Panc1 (cell line): ENCODE measurements at regions of chr7 and their contacts with region 1.

Region 1: DNA sequence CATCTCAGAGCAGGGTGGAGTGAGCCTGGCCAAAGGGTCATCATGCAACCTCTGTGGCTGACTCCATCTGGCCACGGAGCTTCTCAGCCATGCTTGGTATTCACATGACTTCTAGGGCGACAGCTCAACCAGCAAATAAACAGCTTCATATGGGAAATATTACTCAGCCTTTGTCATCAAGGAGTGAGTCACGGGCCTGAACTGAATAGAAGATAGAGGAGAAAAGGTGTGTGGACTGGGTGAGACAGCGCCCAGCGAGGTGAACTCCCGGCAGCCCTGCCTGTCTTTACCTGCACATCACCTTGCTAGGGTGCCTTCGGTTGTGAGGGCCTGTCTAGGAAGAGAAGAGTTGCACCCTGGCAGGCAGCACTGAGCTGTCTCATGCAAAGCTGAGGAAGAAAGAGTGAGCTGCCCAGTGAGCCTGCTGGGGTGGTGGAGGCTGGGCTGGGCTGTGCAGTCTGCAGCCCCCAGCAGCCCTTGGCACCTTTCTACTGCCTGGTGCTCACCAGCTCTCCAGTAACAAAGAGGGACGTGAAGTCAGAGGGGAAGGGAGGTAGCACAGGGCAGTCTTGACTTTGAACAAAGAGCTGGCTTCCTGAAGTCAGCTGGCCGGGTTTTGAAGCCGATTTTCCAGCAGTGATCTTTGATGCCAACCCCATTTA is 114.2 kb downstream of the EGFR start:
- DNase-seq: peak; percentile 99
- ATAC-seq: peak; percentile 86
- H3K4me3 ChIP-seq: peak overlapping the region in 1 of 2 experiments; percentile 35; a peak in 2 of 4 replicates
- H3K27ac ChIP-seq: peak overlapping the region; percentile 99
- H3K4me1 ChIP-seq: peaks cover 71% of the 10 kb centered on the region
- H3K27me3 ChIP-seq: no peaks in the 10 kb centered on the region
- CTCF ChIP-seq: no peak

Region 2: DNA sequence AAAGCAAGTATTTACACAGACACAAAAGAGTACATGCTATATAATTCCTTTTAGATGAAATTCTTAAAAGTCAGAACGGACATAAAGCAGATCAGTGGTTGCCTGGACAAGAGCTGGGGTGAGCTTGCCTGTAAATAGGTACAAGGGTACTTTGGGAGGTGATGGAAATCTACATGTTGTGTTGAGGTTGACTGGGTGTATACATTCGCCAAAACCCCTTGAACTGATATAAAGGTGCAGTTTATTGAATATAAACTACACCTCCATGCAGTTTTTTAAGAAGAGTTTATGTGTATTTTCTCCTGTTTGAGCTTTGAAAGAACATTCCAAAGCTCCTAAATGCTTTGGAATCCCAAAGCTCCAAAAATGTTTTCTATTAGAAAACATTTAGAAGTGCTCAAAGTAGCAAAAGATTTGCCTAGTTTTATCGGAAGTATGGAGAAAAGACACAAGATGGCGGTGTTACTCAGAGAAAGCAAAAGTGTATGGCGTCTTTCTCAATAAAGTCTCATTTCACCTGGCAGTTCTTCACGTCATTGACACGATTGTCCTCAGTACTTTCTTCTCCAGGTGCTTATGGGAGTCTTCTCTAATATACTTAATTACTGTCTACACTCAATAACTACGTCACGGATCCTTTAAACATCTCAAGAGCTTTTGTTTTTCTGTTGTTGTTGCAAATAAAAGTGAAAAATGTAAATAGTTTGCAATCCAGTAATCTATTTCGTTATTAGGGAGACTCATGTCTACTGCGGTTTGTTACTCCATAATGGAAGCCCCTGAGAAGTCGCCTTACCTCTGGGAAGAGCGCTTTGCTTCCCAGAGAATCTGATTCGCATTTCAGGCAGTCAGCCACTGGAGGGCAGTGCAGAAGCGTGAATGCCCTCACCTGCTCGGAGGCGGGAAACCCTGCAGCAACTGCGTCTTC is 359.3 kb before region 1 on chr7:
- CTCF ChIA-PET with region 1: no interaction called
- POLR2A ChIA-PET with region 1: no interaction called
- in situ Hi-C with region 1: no loop called
- intact Hi-C with region 1: loop called (anchors 10 kb)
- DNase-seq: peak; percentile 91
- ATAC-seq: peak; percentile 99
- H3K4me3 ChIP-seq: peak overlapping the region; percentile 46 to 59
- H3K27ac ChIP-seq: peak overlapping the region; percentile 66
- H3K4me1 ChIP-seq: no peaks in the 10 kb centered on the region
- H3K27me3 ChIP-seq: peaks cover 5% of the 10 kb centered on the region; the same call in 1 of the 2 replicates
- CTCF ChIP-seq: peak; percentile 96

Region 3: DNA sequence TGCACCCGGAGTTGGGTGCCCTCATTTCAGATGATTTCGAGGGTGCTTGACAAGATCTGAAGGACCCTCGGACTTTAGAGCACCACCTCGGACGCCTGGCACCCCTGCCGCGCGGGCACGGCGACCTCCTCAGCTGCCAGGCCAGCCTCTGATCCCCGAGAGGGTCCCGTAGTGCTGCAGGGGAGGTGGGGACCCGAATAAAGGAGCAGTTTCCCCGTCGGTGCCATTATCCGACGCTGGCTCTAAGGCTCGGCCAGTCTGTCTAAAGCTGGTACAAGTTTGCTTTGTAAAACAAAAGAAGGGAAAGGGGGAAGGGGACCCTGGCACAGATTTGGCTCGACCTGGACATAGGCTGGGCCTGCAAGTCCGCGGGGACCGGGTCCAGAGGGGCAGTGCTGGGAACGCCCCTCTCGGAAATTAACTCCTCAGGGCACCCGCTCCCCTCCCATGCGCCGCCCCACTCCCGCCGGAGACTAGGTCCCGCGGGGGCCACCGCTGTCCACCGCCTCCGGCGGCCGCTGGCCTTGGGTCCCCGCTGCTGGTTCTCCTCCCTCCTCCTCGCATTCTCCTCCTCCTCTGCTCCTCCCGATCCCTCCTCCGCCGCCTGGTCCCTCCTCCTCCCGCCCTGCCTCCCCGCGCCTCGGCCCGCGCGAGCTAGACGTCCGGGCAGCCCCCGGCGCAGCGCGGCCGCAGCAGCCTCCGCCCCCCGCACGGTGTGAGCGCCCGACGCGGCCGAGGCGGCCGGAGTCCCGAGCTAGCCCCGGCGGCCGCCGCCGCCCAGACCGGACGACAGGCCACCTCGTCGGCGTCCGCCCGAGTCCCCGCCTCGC is 114.4 kb before region 1 on chr7 and contains the start of gene EGFR:
- CTCF ChIA-PET with region 1: no interaction called
- POLR2A ChIA-PET with region 1: interaction called, 3 read pairs
- in situ Hi-C with region 1: no loop called
- intact Hi-C with region 1: loop called (anchors 2 kb)
- DNase-seq: no peak
- ATAC-seq: peak; percentile 94
- H3K4me3 ChIP-seq: peak within 1 kb of the TSS; percentile 74 to 85
- H3K27ac ChIP-seq: peak within 1 kb of the TSS; percentile 91
- H3K4me1 ChIP-seq: peaks cover 31% of the 10 kb centered on the region
- H3K27me3 ChIP-seq: no peaks in the 10 kb centered on the region
- CTCF ChIP-seq: no peak
- total RNA-seq, gene EGFR: 156 TPM

Region 4: DNA sequence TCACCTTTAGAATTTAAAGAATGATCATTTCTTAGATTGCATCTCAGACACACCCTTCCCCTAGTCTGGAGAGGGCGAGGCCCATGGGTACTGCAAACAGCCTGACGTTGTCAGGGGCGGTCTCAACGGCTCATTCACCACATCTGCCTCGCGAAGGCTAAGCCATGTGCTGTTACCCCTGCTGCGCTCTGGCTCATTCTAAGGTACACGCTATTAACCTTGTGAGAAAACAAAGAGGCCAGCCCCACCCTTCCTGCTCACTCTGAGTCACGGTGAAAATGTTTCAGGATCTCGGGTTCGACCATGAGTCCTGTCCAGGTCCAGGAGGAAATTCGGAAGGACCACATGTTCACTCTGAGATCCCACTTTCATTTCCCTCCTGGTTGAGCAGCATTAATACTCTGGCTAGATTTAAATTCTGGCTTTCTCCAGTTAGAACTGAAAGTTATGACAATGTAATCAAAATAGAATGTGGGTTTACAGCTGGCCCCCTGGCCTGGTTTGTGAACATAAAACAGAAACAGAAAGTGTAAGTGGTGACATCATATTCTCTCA is 59.0 kb before region 1 on chr7:
- CTCF ChIA-PET with region 1: no interaction called
- POLR2A ChIA-PET with region 1: interaction called, 6 read pairs
- in situ Hi-C with region 1: no loop called
- intact Hi-C with region 1: loop called (anchors 5 kb)
- DNase-seq: peak; percentile 99
- ATAC-seq: peak; percentile 89
- H3K4me3 ChIP-seq: peak overlapping the region; percentile 36 to 48
- H3K27ac ChIP-seq: peak overlapping the region; percentile 100
- H3K4me1 ChIP-seq: peaks cover 97% of the 10 kb centered on the region
- H3K27me3 ChIP-seq: no peaks in the 10 kb centered on the region
- CTCF ChIP-seq: no peak

Region 5: DNA sequence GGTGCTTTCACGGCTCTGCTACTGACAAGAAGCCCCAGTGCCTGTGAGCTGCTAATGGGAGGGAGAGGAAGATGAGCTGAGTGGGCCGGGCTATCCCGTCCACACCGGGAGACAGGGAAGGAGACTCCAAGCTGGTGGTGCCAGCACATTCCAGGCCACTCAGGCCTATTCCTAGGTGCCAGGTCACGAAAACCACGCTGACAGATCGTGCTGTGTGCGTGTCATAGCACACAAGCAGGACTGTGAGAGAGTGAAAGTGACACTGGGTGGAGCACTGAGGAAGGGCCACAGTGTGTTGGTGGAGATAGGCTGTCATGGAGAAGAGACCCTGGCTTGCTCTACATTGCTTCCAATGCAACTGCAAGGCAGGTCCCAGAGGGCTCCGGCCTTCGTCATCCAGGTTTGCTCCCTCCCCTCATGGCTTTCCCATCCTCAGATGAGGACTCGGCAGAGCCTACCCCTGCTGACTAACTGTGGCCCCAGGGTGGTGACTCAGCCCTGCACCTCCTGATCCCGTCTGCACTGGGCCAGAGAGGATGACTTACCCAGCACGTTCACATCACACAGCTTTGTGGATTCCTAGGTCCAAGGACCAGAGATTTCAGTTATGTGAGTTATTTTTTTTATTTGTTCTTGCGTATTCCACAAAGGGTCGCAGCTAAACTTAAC is 53.1 kb after region 1 on chr7:
- CTCF ChIA-PET with region 1: no interaction called
- POLR2A ChIA-PET with region 1: no interaction called
- in situ Hi-C with region 1: no loop called
- intact Hi-C with region 1: no loop called
- DNase-seq: peak; percentile 94
- ATAC-seq: peak; percentile 96
- H3K4me3 ChIP-seq: no peak overlapping the region
- H3K27ac ChIP-seq: peak overlapping the region; percentile 40; the same call in 1 of the 2 replicates
- H3K4me1 ChIP-seq: peaks cover 14% of the 10 kb centered on the region
- H3K27me3 ChIP-seq: no peaks in the 10 kb centered on the region
- CTCF ChIP-seq: no peak